ENCODE measurements at regions of chr1 and their contacts with region 1.

Region 1: DNA sequence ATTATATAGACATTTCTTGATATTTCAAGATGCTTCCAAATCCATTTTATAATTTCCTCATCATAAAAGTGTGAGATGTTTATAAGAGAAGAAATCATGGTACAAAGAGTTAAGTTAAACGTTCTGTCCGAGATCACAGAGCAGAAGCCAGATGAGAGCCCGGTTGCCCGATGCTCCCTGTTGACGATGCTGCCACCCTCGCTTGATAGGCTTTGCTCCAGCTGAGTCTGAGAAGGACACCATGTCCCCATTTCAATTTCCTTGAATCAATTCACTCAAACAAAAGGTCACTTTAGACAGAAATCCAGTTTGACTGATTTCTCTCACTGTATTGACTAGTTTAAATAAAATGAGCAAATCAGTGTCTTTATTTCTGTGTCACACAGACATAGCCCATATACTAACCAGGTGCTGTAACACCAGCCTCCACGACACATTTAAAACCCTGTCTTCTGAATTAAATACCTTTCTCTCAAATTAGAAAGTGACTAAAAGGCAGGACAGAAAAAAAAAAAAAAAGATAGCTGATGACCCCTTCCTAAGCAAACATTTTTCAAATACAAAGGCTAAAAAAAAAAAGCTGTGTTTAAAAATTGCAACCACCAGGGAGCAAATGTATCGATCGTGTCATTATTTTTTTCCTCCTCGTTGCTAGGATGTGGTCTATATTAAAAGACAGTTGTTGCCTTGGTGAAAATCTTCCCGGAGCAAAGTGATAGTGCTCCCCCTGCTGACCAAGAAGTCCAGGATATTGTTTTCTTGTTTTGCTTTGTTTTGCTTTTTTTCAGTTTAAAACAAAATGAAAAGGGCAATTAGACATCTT is 35.2 kb downstream of the DNASE2B start:
- DNase-seq: peak; percentile 49
- ATAC-seq: peak; percentile 84 to 85
- H3K4me3 ChIP-seq: peak overlapping the region; percentile 26
- H3K27ac ChIP-seq: no peak overlapping the region
- H3K4me1 ChIP-seq: peaks cover 10% of the 10 kb centered on the region
- H3K27me3 ChIP-seq: no peaks in the 10 kb centered on the region
- CTCF ChIP-seq: peak; percentile 71

Region 2: GRCh38 chr1:84143796-84144565 is 289.5 kb before region 1 on chr1 and contains the start of gene PRKACB:
- intact Hi-C with region 1: loop called (anchors 10 kb)
- DNase-seq: no peak
- ATAC-seq: peak; percentile 70 to 79
- H3K4me3 ChIP-seq: peak within 1 kb of the TSS; percentile 37
- H3K27ac ChIP-seq: peak within 1 kb of the TSS; percentile 77
- H3K4me1 ChIP-seq: no peaks in the 10 kb centered on the region
- H3K27me3 ChIP-seq: no peaks in the 10 kb centered on the region
- CTCF ChIP-seq: no peak
- total RNA-seq, gene PRKACB: 39.7 TPM

Region 3: GRCh38 chr1:84525779-84526178 is 92.3 kb after region 1 on chr1:
- intact Hi-C with region 1: no loop called
- DNase-seq: no peak
- ATAC-seq: no peak
- H3K4me3 ChIP-seq: no peak overlapping the region
- H3K27ac ChIP-seq: no peak overlapping the region
- H3K4me1 ChIP-seq: no peaks in the 10 kb centered on the region
- H3K27me3 ChIP-seq: no peaks in the 10 kb centered on the region
- CTCF ChIP-seq: no peak

Region 4: DNA sequence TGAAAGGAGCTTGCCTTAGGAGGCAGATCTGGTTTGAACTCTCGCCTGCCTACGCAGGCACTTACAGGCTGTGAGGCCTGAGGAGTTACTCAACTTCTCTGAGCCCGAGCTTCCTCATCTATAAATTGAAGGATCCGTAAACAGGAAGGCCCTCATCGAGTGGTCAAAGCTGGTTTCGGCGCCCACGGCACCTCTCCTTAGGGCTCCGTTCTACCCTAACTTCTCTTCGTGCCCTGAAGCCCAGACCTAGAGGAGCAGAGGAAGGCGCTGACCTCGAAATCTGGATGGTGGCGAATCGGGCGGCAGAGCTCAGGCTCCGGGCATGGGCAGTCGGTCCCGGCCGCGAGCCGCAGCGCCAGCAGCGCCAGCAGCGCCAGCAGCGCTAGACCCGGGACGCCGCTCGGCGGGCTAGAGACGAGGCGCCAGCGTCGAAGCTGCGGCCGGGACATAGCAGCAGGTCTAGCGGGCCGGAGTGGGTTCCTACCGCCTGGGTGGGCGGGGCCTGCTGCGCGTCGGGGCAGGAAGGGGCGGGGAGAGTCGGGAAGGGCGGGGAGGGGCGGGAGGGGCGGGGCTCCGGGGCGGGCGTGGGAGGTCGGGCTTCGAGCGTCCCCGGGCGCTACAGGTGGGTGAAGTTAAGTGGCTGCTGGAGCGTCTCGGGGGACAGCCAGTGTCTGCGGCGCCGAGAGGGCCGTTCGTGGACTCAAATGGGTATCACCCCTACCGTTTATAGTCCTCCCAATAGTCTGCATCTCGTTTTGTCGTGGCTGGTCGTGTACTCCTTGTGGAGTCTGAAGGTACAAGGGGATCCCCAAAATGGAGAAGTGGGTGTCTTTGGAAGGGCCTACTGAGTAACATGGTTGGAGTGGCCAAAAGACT is 140.7 kb after region 1 on chr1 and contains the start of gene CTBS:
- intact Hi-C with region 1: no loop called
- DNase-seq: peak; percentile 93
- ATAC-seq: peak; percentile 98 to 99
- H3K4me3 ChIP-seq: peak within 1 kb of the TSS; percentile 66
- H3K27ac ChIP-seq: peak within 1 kb of the TSS; percentile 99
- H3K4me1 ChIP-seq: peaks cover 17% of the 10 kb centered on the region
- H3K27me3 ChIP-seq: no peaks in the 10 kb centered on the region
- CTCF ChIP-seq: no peak
- total RNA-seq, gene CTBS: 27.4 TPM